Activated CD4-positive, alpha-beta T cell treated with anti-CD3 and anti-CD28 coated beads, Interleukin-2, amount 10 ng/mL, durations not matched to agents 7 days and 5 days (primary cell): ENCODE measurements at regions of chr17 and their contacts with region 1.

Region 1: GRCh38 chr17:65100316-65101140 is 36.6 kb upstream of the RGS9 start:
- DNase-seq: peak; percentile 84
- H3K4me3 Mint-ChIP-seq: peak overlapping the region; percentile 83
- H3K27ac Mint-ChIP-seq: peak overlapping the region; percentile 96
- H3K4me1 Mint-ChIP-seq: peaks cover 21% of the 10 kb centered on the region
- H3K27me3 Mint-ChIP-seq: peaks cover 5% of the 10 kb centered on the region

Region 2: GRCh38 chr17:65078441-65079160 is 21.9 kb before region 1 on chr17:
- CTCF ChIA-PET with region 1: interaction called, 12 read pairs
- POLR2A ChIA-PET with region 1: no interaction called
- DNase-seq: no peak
- H3K4me3 Mint-ChIP-seq: no peak overlapping the region
- H3K27ac Mint-ChIP-seq: no peak overlapping the region
- H3K4me1 Mint-ChIP-seq: peaks cover 4% of the 10 kb centered on the region
- H3K27me3 Mint-ChIP-seq: peaks cover 2% of the 10 kb centered on the region

Region 3: DNA sequence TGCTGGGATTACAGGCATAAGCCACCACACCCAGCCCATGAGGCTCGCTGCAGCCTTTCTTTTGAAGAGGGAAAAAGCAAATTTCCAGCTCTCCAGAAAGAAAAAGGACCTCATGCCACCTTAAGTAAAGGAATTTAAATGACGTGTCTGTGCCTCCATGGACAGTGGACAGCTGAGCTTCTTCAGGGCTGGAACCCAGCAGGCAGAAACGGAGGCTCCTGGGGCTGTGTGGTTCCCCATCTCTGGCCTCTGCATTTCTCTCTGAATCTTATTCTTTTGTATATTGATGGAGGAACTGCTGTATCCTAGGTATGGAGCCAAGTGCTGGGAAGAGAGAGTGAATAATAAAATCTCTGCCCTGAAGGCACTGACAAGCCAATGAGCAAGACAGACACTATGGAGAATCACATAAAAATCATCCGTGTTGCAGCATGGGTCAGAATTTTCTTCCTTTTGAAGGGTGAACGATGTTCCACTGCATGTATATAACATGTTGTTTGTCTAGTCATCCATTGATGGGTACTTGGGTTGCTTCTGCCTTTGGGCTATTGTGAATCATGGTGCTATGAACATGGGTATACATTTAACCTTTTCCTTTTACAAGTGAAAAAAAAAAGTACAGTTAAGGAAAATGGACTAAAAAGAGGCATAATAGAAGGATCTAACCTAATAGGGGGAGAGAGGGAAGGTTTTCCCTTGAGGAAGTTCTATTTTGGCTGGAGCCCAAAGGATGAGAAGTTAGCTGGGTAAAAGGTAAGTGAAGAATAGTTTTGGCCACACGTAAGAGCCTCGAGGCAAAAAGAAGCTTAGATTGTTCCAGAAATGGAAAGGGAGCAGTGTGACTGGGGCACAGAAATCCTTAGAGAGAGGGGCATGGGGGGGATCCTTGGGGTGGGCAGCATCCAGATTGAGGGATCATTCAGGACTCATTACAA is 11.8 kb before region 1 on chr17:
- CTCF ChIA-PET with region 1: interaction called, 18 read pairs
- POLR2A ChIA-PET with region 1: no interaction called
- DNase-seq: no peak
- H3K4me3 Mint-ChIP-seq: no peak overlapping the region
- H3K27ac Mint-ChIP-seq: no peak overlapping the region
- H3K4me1 Mint-ChIP-seq: no peaks in the 10 kb centered on the region
- H3K27me3 Mint-ChIP-seq: peaks cover 7% of the 10 kb centered on the region

Region 4: GRCh38 chr17:65122836-65123756 is 22.6 kb after region 1 on chr17:
- CTCF ChIA-PET with region 1: interaction called, 13 read pairs
- POLR2A ChIA-PET with region 1: no interaction called
- DNase-seq: peak; percentile 89
- H3K4me3 Mint-ChIP-seq: peak overlapping the region; percentile 80
- H3K27ac Mint-ChIP-seq: peak overlapping the region; percentile 92
- H3K4me1 Mint-ChIP-seq: peaks cover 30% of the 10 kb centered on the region
- H3K27me3 Mint-ChIP-seq: peaks cover 11% of the 10 kb centered on the region

Region 5: DNA sequence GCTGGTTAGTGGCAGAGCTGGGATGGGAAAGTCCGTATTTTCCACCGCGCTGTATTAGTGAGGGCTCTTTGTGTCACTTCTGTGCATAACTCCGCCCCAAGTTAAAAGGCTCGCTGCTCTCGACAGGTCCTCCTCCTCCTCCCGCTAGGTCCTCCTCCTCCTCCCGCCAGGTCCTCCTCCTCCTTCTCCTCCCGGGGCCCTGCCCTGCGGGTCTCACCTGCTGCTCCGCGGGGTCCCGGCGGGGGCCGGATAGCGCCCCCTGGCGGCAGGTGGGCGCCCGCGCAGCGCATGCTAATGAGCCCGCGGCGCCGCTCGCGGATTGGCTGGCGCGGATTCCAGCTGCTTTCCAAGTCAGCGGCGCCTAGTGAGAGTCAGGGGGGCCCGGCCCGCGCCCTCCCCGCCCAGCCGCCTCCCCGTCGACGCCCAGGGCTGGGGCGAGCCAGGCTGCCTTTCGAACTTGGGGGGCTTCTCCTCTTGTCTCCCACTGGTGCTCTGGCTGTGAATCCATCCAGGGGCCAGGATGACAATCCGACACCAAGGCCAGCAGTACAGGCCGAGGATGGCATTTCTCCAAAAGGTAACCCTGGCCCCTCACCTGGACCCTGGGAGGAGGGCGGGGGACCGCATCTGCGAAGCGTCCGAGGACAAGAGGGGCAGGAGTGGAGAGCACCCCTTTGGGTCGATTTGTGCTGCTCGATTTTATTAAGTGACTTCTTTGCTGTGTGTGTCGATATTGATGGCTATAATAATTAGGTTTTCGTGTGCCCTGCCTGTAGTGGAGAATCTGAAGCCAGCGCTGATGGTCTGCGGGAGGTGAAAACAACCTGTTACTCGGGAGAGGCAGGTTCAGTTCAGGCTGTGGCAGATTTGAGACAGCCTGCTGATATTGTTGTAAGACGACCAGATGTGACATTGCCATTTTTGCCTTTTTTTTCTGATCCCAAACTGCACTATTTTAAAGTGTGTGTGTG is 36.8 kb after region 1 on chr17 and contains the start of gene RGS9:
- CTCF ChIA-PET with region 1: interaction called, 12 read pairs
- POLR2A ChIA-PET with region 1: no interaction called
- DNase-seq: peak; percentile 86
- H3K4me3 Mint-ChIP-seq: peak within 1 kb of the TSS; percentile 75
- H3K27ac Mint-ChIP-seq: peak within 1 kb of the TSS; percentile 26
- H3K4me1 Mint-ChIP-seq: peaks cover 29% of the 10 kb centered on the region
- H3K27me3 Mint-ChIP-seq: peaks cover 20% of the 10 kb centered on the region
- total RNA-seq, gene RGS9: 6.0 to 6.3 TPM

Region 6: GRCh38 chr17:65246253-65246652 is 145.7 kb after region 1 on chr17:
- CTCF ChIA-PET with region 1: no interaction called
- POLR2A ChIA-PET with region 1: no interaction called
- DNase-seq: no peak
- H3K4me3 Mint-ChIP-seq: no peak overlapping the region
- H3K27ac Mint-ChIP-seq: no peak overlapping the region
- H3K4me1 Mint-ChIP-seq: peaks cover 7% of the 10 kb centered on the region
- H3K27me3 Mint-ChIP-seq: peaks cover 30% of the 10 kb centered on the region